GM10248 (cell line): ENCODE measurements at regions of chr12 and their contacts with region 1.

Region 1: GRCh38 chr12:57836442-57837375 is 9.8 kb downstream of the CTDSP2 start:
- DNase-seq: peak; percentile 63
- CTCF ChIP-seq: no peak

Region 2: GRCh38 chr12:57803319-57803893 is 33.3 kb before region 1 on chr12:
- CTCF ChIA-PET with region 1: interaction called, 10 read pairs
- POLR2A ChIA-PET with region 1: no interaction called
- DNase-seq: peak; percentile 42
- CTCF ChIP-seq: peak; percentile 64

Region 3: GRCh38 chr12:57846577-57847319 is 10.0 kb after region 1 on chr12 and contains the start of gene CTDSP2:
- CTCF ChIA-PET with region 1: interaction called, 30 read pairs
- POLR2A ChIA-PET with region 1: interaction called, 9 read pairs
- DNase-seq: peak; percentile 97
- CTCF ChIP-seq: no peak